ENCODE measurements at regions of chr12 and their contacts with region 1.

Region 1: GRCh38 chr12:121351820-121352681 is at the start of gene ANAPC5:
- DNase-seq: peak; percentile 99
- H3K4me3 ChIP-seq: peak within 1 kb of the TSS; percentile 89
- H3K27ac ChIP-seq: peak within 1 kb of the TSS; percentile 78
- H3K4me1 ChIP-seq: no peaks in the 10 kb centered on the region
- H3K27me3 ChIP-seq: no peaks in the 10 kb centered on the region
- CTCF ChIP-seq: peak; percentile 24; the same call in 1 of the 2 replicates
- total RNA-seq, gene ANAPC5: 142 and 145 TPM in 2 replicates

Region 2: GRCh38 chr12:121399391-121400331 is 47.6 kb after region 1 on chr12 and contains the start of gene RNF34:
- CTCF ChIA-PET with region 1: interaction called, 4 read pairs
- POLR2A ChIA-PET with region 1: interaction called, 12 read pairs
- intact Hi-C with region 1: loop called (anchors 5 kb)
- DNase-seq: peak; percentile 99
- H3K4me3 ChIP-seq: peak within 1 kb of the TSS; percentile 88
- H3K27ac ChIP-seq: peak within 1 kb of the TSS; percentile 89
- H3K4me1 ChIP-seq: peaks cover 23% of the 10 kb centered on the region
- H3K27me3 ChIP-seq: no peaks in the 10 kb centered on the region
- CTCF ChIP-seq: no peak
- total RNA-seq, gene RNF34: 54.6 and 60.6 TPM in 2 replicates